CD8-positive, alpha-beta memory T cell (primary cell): ENCODE measurements at regions of chr10 and their contacts with region 1.

Region 1: GRCh38 chr10:86399879-86400704 is 33.5 kb upstream of the GRID1 start:
- DNase-seq: peak; percentile 86 to 95 (median 87)
- H3K4me3 ChIP-seq: peak overlapping the region; percentile 84
- H3K4me3 Mint-ChIP-seq: peak overlapping the region; percentile 86 to 97 (median 91)
- H3K27ac ChIP-seq: peak overlapping the region; percentile 38
- H3K27ac Mint-ChIP-seq: peak overlapping the region; percentile 77 to 95 (median 88)
- H3K4me1 ChIP-seq: peaks cover 14% of the 10 kb centered on the region
- H3K4me1 Mint-ChIP-seq: peaks cover 12 to 15% (median 15%) of the 10 kb centered on the region in 3 donors
- H3K27me3 ChIP-seq: no peaks in the 10 kb centered on the region
- H3K27me3 Mint-ChIP-seq: peaks cover 0 to 3% of the 10 kb centered on the region in 2 donors

Region 2: GRCh38 chr10:86197166-86197790 is 202.8 kb before region 1 on chr10:
- CTCF ChIA-PET with region 1: no interaction called
- POLR2A ChIA-PET with region 1: no interaction called
- DNase-seq: no peak
- H3K4me3 ChIP-seq: no peak overlapping the region
- H3K4me3 Mint-ChIP-seq: no peak overlapping the region
- H3K27ac ChIP-seq: no peak overlapping the region
- H3K27ac Mint-ChIP-seq: no peak overlapping the region
- H3K4me1 ChIP-seq: no peaks in the 10 kb centered on the region
- H3K4me1 Mint-ChIP-seq: no peaks in the 10 kb centered on the region
- H3K27me3 ChIP-seq: no peaks in the 10 kb centered on the region
- H3K27me3 Mint-ChIP-seq: peaks cover 2 to 20% of the 10 kb centered on the region in 2 donors

Region 3: GRCh38 chr10:86366033-86366901 is 33.8 kb before region 1 on chr10 and contains the start of gene GRID1:
- CTCF ChIA-PET with region 1: no interaction called
- POLR2A ChIA-PET with region 1: no interaction called
- DNase-seq: no peak
- H3K4me3 ChIP-seq: no peak within 1 kb of the TSS
- H3K4me3 Mint-ChIP-seq: peak within 1 kb of the TSS; percentile 15 to 88 (median 81)
- H3K27ac ChIP-seq: no peak within 1 kb of the TSS
- H3K27ac Mint-ChIP-seq: peak within 1 kb of the TSS in 1 of 8 donors; percentile 70
- H3K4me1 ChIP-seq: peaks cover 9% of the 10 kb centered on the region
- H3K4me1 Mint-ChIP-seq: peaks cover 7 to 27% (median 9%) of the 10 kb centered on the region in 3 donors
- H3K27me3 ChIP-seq: peaks cover 22% of the 10 kb centered on the region
- H3K27me3 Mint-ChIP-seq: peaks cover 46 to 62% of the 10 kb centered on the region in 2 donors
- total RNA-seq, gene GRID1: not detected

Region 4: GRCh38 chr10:86389441-86390193 is 10.5 kb before region 1 on chr10:
- CTCF ChIA-PET with region 1: interaction called, 13 read pairs
- POLR2A ChIA-PET with region 1: interaction called, 5 read pairs
- DNase-seq: peak in 1 of 5 donors; percentile 15
- H3K4me3 ChIP-seq: peak overlapping the region; percentile 54
- H3K4me3 Mint-ChIP-seq: peak overlapping the region; percentile 78 to 92 (median 87)
- H3K27ac ChIP-seq: no peak overlapping the region
- H3K27ac Mint-ChIP-seq: peak overlapping the region in 3 of 8 donors; percentile 29 to 62 (median 57)
- H3K4me1 ChIP-seq: peaks cover 5% of the 10 kb centered on the region
- H3K4me1 Mint-ChIP-seq: peaks cover 4 to 9% (median 8%) of the 10 kb centered on the region in 3 donors
- H3K27me3 ChIP-seq: no peaks in the 10 kb centered on the region
- H3K27me3 Mint-ChIP-seq: peaks cover 27 to 31% of the 10 kb centered on the region in 2 donors

Region 5: GRCh38 chr10:86419101-86419500 is 19.0 kb after region 1 on chr10:
- CTCF ChIA-PET with region 1: interaction called, 55 read pairs
- POLR2A ChIA-PET with region 1: interaction called, 50 read pairs
- DNase-seq: no peak
- H3K4me3 ChIP-seq: no peak overlapping the region
- H3K4me3 Mint-ChIP-seq: no peak overlapping the region
- H3K27ac ChIP-seq: no peak overlapping the region
- H3K27ac Mint-ChIP-seq: peak overlapping the region in 2 of 8 donors; percentile 21 to 48
- H3K4me1 ChIP-seq: peaks cover 11% of the 10 kb centered on the region
- H3K4me1 Mint-ChIP-seq: peaks cover 10 to 17% (median 12%) of the 10 kb centered on the region in 3 donors
- H3K27me3 ChIP-seq: no peaks in the 10 kb centered on the region
- H3K27me3 Mint-ChIP-seq: peaks cover 0 to 4% of the 10 kb centered on the region in 2 donors

Region 6: DNA sequence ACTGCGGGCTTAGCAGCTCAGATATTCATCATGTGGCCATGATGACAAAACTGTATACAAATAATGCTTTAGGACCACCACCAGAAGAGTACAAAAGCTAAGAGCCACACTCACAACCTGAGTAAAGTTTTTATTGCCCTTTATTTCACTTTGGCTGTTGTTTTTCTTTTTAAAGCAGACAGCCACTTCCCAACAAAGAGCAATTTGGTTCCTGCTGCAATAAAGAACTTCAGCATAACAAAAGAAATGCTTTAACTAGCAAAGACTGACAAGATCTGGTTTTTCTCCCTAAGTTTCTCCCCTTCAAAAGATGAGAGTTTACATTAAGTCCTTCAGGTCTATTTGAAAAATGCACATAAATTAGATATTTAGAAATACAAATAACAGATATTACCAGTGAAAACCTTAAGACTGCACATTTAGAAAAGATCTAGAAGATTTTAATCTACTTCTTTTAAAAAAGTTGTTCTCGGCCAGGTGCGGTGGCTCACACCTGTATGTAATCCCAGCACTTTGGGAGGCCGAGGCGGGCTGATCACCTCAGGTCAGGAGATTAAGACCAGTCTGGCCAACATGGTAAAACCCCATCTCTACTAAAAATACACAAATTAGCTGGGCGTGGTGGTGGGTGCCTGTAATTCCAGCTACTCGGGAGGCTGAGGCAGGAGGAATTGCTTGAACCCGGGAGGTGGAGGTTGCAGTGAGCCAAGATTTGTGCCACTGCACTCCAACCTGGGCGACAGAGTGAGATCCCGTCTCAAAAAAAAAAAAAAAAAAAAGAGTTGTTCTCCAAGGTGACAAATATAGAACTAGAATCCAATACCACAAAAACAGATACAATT is 62.1 kb after region 1 on chr10:
- CTCF ChIA-PET with region 1: interaction called, 10 read pairs
- POLR2A ChIA-PET with region 1: no interaction called
- DNase-seq: no peak
- H3K4me3 ChIP-seq: no peak overlapping the region
- H3K4me3 Mint-ChIP-seq: no peak overlapping the region
- H3K27ac ChIP-seq: no peak overlapping the region
- H3K27ac Mint-ChIP-seq: peak overlapping the region in 4 of 8 donors; percentile 13 to 35 (median 22)
- H3K4me1 ChIP-seq: no peaks in the 10 kb centered on the region
- H3K4me1 Mint-ChIP-seq: peaks cover 0 to 3% (median 2%) of the 10 kb centered on the region in 3 donors
- H3K27me3 ChIP-seq: no peaks in the 10 kb centered on the region
- H3K27me3 Mint-ChIP-seq: no peaks in the 10 kb centered on the region

Region 7: DNA sequence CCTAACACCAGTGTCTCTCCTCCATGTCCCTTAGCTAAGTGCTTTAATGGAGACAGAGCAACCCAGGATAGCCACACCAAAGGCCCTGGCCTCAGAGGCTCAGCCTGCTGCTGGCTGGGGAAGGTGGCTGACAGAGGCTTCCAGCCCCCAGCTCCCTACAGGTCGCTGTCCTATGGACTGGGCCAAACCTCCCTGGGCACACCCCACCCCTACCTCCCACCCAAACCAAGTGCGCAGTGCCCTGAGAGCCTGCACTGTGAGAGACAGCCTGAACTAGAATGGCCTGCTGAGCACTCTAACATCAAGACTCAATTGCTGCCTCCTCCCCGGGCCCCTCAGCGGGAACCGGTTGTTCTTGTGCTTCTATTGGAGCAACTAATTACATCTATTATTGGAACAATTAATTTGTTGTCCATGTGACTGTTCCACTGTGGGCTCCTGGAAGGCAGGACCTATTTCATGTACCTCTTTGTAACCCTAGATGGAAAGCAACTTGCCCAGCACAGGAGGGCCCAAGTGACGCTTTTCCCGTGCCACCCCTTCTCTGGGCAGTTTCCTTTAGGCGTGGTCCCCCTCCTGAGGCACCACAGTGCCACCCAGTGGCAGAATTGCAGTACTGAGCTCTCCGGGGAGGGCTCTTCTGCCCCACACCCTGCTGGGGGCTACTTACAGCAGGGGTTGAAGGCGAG is 185.1 kb after region 1 on chr10:
- CTCF ChIA-PET with region 1: interaction called, 99 read pairs
- POLR2A ChIA-PET with region 1: interaction called, 11 read pairs
- DNase-seq: peak; percentile 58 to 79 (median 59)
- H3K4me3 ChIP-seq: no peak overlapping the region
- H3K4me3 Mint-ChIP-seq: no peak overlapping the region
- H3K27ac ChIP-seq: no peak overlapping the region
- H3K27ac Mint-ChIP-seq: peak overlapping the region in 1 of 8 donors; percentile 38
- H3K4me1 ChIP-seq: no peaks in the 10 kb centered on the region
- H3K4me1 Mint-ChIP-seq: no peaks in the 10 kb centered on the region
- H3K27me3 ChIP-seq: no peaks in the 10 kb centered on the region
- H3K27me3 Mint-ChIP-seq: peaks cover 0 to 2% of the 10 kb centered on the region in 2 donors